ENCODE measurements at regions of chrX and their contacts with region 1.

Region 1: DNA sequence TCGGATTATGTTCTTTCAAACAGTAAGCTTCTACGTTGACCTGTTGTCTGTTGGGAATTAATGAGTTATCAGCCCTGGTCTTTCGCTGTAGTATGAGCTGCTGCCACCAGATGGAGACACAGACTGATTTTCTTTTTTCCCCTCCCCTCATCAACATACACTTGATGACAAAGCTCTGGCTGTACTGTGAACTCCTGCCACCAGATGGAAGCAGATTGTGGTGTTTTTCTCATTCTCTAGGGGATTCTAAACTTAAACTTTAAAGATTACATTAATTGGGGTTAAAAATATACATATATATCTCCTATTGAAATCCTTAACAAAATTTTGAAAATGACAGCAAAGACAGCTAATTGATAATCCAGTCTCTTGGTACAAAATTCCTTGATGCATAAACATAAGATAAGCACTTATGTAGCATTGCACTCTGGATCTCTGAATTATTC is 44.8 kb downstream of the SMS start:
- DNase-seq: peak; percentile 66
- CTCF ChIP-seq: peak; percentile 59

Region 2: GRCh38 chrX:21885568-21885967 is 99.8 kb before region 1 on chrX:
- CTCF ChIA-PET with region 1: no interaction called
- POLR2A ChIA-PET with region 1: no interaction called
- DNase-seq: no peak
- CTCF ChIP-seq: no peak

Region 3: DNA sequence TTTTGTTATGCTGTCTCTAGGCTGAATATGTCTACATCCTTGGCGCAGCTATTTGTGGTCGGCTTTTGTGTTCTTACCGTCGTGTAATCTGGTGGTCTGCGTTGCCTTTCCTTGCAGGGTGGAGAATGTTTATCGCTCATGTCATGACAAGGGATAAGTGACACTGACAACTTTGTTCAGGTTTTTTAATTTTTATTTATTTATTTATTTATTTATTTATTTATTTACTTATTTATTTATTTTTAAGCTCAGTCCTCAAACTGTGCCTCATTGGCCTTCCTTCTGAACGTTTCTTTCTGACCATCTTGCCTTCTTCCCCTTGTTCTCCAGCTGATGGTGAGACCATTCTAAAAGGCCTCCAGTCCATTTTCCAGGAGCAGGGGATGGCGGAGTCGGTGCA is 18.5 kb before region 1 on chrX:
- CTCF ChIA-PET with region 1: interaction called, 10 read pairs
- POLR2A ChIA-PET with region 1: no interaction called
- DNase-seq: no peak
- CTCF ChIP-seq: no peak

Region 4: GRCh38 chrX:21998037-21998436 is 12.7 kb after region 1 on chrX:
- CTCF ChIA-PET with region 1: interaction called, 14 read pairs
- POLR2A ChIA-PET with region 1: interaction called, 3 read pairs
- DNase-seq: no peak
- CTCF ChIP-seq: no peak

Region 5: DNA sequence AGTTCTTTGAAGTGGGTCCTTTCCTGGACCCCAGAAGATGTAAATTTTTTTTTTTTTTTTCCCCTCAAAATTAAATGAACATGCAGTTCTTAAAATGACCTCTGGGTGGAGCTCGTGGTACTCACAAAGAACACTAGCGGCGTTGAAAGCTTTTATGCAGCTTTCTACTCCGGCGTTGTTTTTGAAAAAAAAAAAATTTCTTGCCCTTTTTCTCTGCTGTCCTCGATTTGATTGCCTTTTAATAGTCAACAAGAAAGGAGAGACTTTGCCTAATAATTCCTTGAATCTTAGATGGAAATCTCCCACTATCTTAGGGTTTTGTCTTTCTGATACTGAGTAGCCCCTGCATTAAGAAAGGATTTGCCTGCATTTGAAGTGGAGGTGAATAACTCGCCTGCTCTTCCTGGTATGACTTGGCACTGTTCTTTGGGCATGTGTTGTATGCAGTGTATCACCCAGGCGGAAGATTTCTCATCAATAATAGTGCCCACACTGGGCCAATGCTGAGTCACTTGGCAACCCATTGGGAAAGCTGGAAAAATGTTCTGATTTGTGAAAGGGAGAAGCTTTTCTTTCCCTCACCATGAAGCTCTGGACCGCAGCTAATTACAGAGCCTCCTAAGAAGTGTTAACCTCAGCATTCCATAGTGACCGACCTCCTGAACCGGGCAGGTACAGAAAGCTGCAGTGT is 150.8 kb after region 1 on chrX:
- CTCF ChIA-PET with region 1: interaction called, 23 read pairs
- POLR2A ChIA-PET with region 1: no interaction called
- DNase-seq: peak; percentile 25
- CTCF ChIP-seq: peak; percentile 31

Region 6: GRCh38 chrX:22748093-22748999 is 763.0 kb after region 1 on chrX:
- CTCF ChIA-PET with region 1: interaction called, 41 read pairs
- POLR2A ChIA-PET with region 1: no interaction called
- DNase-seq: peak; percentile 28
- CTCF ChIP-seq: peak; percentile 46

Region 7: DNA sequence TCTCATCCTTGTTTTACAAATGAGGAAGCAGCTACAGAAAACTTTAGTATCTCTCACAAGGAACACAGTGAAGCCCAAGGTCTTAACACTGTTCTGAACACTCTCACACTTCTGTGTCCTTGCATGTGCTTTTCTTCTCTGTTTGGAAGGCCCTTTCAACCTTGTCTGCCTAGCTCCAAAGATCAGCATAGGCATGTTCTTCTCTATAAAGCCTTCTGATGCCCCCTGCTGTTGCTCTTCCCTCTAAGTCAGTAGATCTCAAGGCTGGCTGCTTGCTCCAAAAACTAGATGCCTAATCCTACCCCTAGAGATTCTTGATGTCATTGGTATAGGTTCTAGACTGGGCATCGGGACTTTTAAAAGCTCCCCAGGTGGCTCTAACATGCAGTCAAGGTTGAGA is 1916.5 kb after region 1 on chrX:
- CTCF ChIA-PET with region 1: interaction called, 12 read pairs
- POLR2A ChIA-PET with region 1: no interaction called
- DNase-seq: peak; percentile 52
- CTCF ChIP-seq: peak; percentile 55